HepG2 (cell line): ENCODE measurements at regions of chr4 and their contacts with region 1.

Region 1: GRCh38 chr4:127622921-127623656 is 9.7 kb upstream of the INTU start:
- DNase-seq: peak; percentile 5
- ATAC-seq: peak; percentile 99
- H3K4me3 ChIP-seq: peak overlapping the region; percentile 18 to 63 (median 22); a peak in 5 of 6 replicates
- H3K27ac ChIP-seq: no peak overlapping the region
- H3K4me1 ChIP-seq: peaks cover 15% of the 10 kb centered on the region
- H3K27me3 ChIP-seq: peaks cover 0 to 34% of the 10 kb centered on the region in 2 experiments; a peak in 4 of 5 replicates
- CTCF ChIP-seq: peak; percentile 59
- EP300 ChIP-seq: no peak
- POLR2A ChIP-seq: no peak
- RAD21 ChIP-seq: peak; percentile 27; the same call in 1 of the 2 replicates

Region 2: DNA sequence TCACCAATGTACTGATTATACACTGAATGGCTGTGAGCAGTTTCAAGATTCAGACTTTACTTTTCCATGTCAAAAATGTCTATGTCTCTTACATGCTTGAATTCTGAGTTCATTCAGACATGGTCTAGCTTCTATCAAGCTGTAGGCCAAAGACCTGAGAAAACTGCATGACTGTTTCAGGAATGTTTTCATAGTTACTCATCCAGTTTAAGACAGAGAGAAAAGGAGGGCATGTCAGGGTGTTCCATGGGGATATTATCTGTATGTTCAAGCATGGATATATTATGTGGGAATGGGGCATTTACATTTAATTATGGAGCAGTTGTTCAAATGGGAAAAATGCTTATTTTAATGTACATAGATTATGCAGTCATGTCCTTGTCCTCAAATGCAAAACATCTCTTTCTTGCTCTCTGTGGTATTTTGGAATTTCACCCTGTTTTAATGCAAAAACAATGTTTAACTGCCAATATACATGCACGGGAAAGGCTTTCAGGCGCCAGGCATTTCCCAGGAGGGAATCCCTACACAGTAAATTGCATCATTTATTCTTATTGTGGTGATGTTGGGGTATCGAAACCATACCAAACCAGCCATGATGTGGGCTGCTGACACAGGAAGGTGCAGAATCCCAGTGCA is 419.4 kb before region 1 on chr4:
- CTCF ChIA-PET with region 1: no interaction called
- POLR2A ChIA-PET with region 1: no interaction called
- in situ Hi-C with region 1: no loop called
- intact Hi-C with region 1: no loop called
- DNase-seq: no peak
- ATAC-seq: no peak
- H3K4me3 ChIP-seq: no peak overlapping the region
- H3K27ac ChIP-seq: no peak overlapping the region
- H3K4me1 ChIP-seq: no peaks in the 10 kb centered on the region
- H3K27me3 ChIP-seq: no peaks in the 10 kb centered on the region
- CTCF ChIP-seq: no peak
- EP300 ChIP-seq: no peak
- POLR2A ChIP-seq: no peak
- RAD21 ChIP-seq: no peak

Region 3: GRCh38 chr4:127732613-127733328 is 109.7 kb after region 1 on chr4:
- CTCF ChIA-PET with region 1: no interaction called
- POLR2A ChIA-PET with region 1: no interaction called
- in situ Hi-C with region 1: no loop called
- intact Hi-C with region 1: loop called (anchors 5 kb)
- DNase-seq: peak; percentile 35
- ATAC-seq: peak; percentile 82
- H3K4me3 ChIP-seq: no peak overlapping the region
- H3K27ac ChIP-seq: no peak overlapping the region
- H3K4me1 ChIP-seq: no peaks in the 10 kb centered on the region
- H3K27me3 ChIP-seq: no peaks in the 10 kb centered on the region; a peak in 1 of 5 replicates
- CTCF ChIP-seq: peak; percentile 54
- EP300 ChIP-seq: no peak
- POLR2A ChIP-seq: no peak
- RAD21 ChIP-seq: no peak

Region 4: DNA sequence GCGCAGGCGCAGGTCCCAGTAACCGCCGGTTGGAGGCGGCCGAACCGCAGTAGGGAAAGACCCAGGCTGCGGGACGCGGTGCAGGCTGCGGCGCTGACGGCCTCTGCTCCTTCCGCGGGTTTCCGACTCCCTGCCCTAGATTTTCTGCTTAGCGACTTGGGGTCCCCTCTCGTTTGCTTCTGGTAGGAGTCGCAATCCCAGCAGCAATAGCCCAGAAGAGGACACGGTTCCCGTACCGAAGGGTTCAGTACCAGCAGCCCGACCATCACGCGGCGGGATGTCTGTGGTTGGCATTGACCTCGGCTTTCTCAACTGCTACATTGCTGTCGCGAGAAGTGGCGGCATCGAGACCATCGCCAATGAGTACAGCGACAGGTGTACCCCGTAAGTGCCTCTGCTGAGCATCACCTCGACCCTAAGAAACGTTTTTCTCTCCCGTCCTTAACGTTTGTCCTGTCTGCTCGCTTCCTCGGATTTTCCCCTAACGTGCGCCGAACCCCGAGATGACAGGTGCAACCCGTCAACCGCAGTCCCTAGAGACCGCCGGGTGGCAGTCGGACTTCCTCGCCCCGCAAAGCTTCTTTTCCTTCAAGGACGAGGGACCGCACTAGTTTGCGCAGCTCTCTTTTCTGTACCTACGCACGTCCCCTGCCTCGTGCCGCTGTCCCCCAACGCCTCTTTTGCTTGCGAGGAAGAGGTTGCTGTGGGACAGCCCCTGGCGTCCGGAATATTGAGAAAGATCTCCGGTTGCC is 159.4 kb after region 1 on chr4 and contains the start of gene HSPA4L:
- CTCF ChIA-PET with region 1: no interaction called
- POLR2A ChIA-PET with region 1: no interaction called
- in situ Hi-C with region 1: no loop called
- intact Hi-C with region 1: loop called (anchors 5 kb)
- DNase-seq: peak; percentile 68
- ATAC-seq: peak; percentile 95
- H3K4me3 ChIP-seq: peak within 1 kb of the TSS; percentile 69 to 88 (median 82)
- H3K27ac ChIP-seq: peak within 1 kb of the TSS; percentile 69
- H3K4me1 ChIP-seq: peaks cover 27% of the 10 kb centered on the region
- H3K27me3 ChIP-seq: no peaks in the 10 kb centered on the region; a peak in 1 of 5 replicates
- CTCF ChIP-seq: peak; percentile 62
- EP300 ChIP-seq: no peak
- POLR2A ChIP-seq: peak; percentile 90 to 94
- RAD21 ChIP-seq: peak; percentile 41
- total RNA-seq, gene HSPA4L: 31.5 and 61.8 TPM in 2 replicates

Region 5: DNA sequence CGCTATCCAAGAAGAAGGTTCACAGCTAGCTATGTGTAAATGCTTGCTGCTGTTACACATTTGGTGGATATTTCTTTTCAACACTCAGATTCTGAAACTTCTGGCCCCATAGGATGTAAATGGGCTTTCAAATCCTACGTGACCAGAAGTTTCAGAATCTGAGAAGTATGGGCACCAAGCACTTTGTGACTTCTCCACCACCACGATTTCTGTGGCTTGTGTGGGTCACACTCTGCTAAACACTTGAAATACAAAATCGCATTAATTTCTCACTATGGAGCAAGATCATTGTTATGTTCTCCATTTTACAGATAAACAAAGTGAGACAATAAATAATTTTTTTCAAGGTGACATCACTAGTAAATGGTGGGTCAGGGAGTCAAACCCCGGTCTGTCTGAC is 927.0 kb after region 1 on chr4:
- CTCF ChIA-PET with region 1: no interaction called
- POLR2A ChIA-PET with region 1: no interaction called
- in situ Hi-C with region 1: no loop called
- intact Hi-C with region 1: no loop called
- DNase-seq: no peak
- ATAC-seq: no peak
- H3K4me3 ChIP-seq: no peak overlapping the region
- H3K27ac ChIP-seq: no peak overlapping the region
- H3K4me1 ChIP-seq: peaks cover 17% of the 10 kb centered on the region
- H3K27me3 ChIP-seq: peaks cover 0 to 8% of the 10 kb centered on the region in 2 experiments; a peak in 3 of 5 replicates
- CTCF ChIP-seq: no peak
- EP300 ChIP-seq: no peak
- POLR2A ChIP-seq: no peak
- RAD21 ChIP-seq: no peak